Heart right ventricle (tissue), 16 donors: ENCODE measurements at regions of chr3 and their contacts with region 1.

Region 1: GRCh38 chr3:9013782-9014563 is 50.7 kb upstream of the RAD18 start:
- DNase-seq: no peak
- ATAC-seq: no peak
- H3K4me3 ChIP-seq: no peak overlapping the region
- H3K27ac ChIP-seq: no peak overlapping the region
- H3K4me1 ChIP-seq: peaks cover 0 to 6% (median 0%) of the 10 kb centered on the region in 9 donors
- H3K27me3 ChIP-seq: no peaks in the 10 kb centered on the region
- CTCF ChIP-seq: peak in 2 of 9 donors; percentile 7 to 11

Region 2: GRCh38 chr3:9036404-9037131 is 22.6 kb after region 1 on chr3:
- intact Hi-C with region 1: loop called in 1 of 10 experiments (anchors 1 kb)
- DNase-seq: peak; percentile 49 to 70
- ATAC-seq: peak; percentile 56 to 93 (median 77)
- H3K4me3 ChIP-seq: no peak overlapping the region
- H3K27ac ChIP-seq: peak overlapping the region in 9 of 10 donors; percentile 10 to 74 (median 51)
- H3K4me1 ChIP-seq: peaks cover 0 to 27% (median 23%) of the 10 kb centered on the region in 9 donors
- H3K27me3 ChIP-seq: no peaks in the 10 kb centered on the region
- CTCF ChIP-seq: no peak